PC-9 (cell line): ENCODE measurements at regions of chr19 and their contacts with region 1.

Region 1: DNA sequence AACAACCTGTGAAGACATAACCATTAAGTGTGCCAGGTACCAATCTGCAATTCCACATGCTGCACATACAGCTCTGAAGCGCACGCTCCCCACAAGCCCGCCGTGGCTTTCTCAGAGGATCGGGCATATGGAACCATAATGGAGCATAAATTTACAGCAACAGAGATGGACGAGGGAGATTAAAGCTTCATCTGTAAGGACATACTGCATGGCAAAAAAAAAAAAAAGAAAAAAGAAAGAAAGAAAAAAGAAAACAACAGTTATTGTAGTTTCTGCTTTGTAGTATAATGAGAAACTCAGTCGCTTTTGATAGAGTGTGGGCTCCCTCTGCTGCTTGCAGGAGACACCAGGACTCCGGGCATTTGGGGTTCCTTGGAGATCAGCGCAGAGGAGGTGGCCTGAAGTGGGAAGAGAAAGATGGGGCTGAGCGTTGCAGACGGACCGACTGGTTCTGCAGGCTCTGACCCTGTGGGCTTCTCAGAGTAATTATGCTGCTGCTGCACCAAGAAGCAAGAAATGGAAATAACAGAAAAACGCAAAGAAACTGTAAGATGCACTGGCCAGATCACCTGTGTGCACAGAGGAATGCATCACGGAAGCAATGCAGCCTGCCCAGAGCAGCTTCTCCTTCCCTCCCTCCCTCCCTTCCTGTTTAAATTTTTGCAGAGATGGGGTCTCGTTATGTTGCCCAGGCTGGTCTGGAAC is 10.8 kb upstream of the PDCD5 start:
- DNase-seq: peak; percentile 56 to 61
- H3K4me3 ChIP-seq: no peak overlapping the region
- H3K27ac ChIP-seq: no peak overlapping the region
- H3K4me1 ChIP-seq: no peaks in the 10 kb centered on the region
- H3K27me3 ChIP-seq: peaks cover 46% of the 10 kb centered on the region
- CTCF ChIP-seq: peak; percentile 85

Region 2: GRCh38 chr19:30669329-30670010 is 1900.8 kb before region 1 on chr19:
- CTCF ChIA-PET with region 1: no interaction called
- POLR2A ChIA-PET with region 1: no interaction called
- intact Hi-C with region 1: loop called (anchors 5 kb)
- DNase-seq: peak in 1 of 2 experiments; percentile 28
- H3K4me3 ChIP-seq: no peak overlapping the region
- H3K27ac ChIP-seq: no peak overlapping the region
- H3K4me1 ChIP-seq: no peaks in the 10 kb centered on the region
- H3K27me3 ChIP-seq: peaks cover 60% of the 10 kb centered on the region
- CTCF ChIP-seq: peak; percentile 81

Region 3: DNA sequence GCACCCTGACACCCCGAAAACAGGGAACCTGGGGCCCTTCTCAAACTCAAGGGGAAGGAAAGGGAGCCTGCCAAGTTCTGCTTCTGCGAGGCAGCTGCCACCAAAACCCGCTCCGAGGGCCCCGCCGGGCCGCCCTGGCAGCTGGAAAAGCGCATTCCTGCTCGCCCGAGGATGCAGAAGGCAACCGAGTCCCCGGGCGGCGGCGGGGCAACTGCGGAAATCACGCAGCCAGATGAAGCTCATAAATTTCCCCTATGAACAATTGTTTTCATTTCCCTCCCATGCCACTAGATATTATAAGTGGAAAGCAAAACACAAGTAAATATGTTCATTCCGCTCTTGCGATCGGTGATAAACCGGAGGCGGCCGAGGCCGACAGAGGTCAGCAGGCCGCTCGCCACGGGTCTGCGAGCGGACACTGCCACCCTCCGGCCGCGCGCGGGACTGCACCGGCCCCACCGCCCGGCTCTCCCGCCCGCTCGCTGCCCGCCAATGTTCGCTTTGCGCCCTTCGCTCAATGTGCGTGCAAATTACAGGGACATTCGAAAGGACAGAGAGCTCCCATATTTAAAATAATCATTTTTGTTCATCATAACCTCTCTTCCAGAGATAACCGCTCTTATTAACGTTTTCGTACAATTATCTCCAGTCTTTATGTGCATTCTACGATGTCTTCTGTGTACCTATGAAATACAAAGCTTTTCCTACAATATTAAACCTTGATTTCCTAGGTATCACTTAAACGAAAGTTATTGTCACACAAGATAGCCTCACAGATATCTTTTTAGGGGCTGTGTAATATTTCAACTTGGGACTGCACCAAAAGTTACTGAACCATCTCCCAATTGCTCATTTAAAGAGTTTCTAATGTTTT is 345.6 kb before region 1 on chr19:
- CTCF ChIA-PET with region 1: no interaction called
- POLR2A ChIA-PET with region 1: no interaction called
- intact Hi-C with region 1: loop called (anchors 1 kb)
- DNase-seq: peak in 1 of 2 experiments; percentile 62
- H3K4me3 ChIP-seq: no peak overlapping the region
- H3K27ac ChIP-seq: no peak overlapping the region
- H3K4me1 ChIP-seq: no peaks in the 10 kb centered on the region
- H3K27me3 ChIP-seq: peaks cover 41% of the 10 kb centered on the region
- CTCF ChIP-seq: peak; percentile 94

Region 4: GRCh38 chr19:32318880-32319520 is 251.2 kb before region 1 on chr19:
- CTCF ChIA-PET with region 1: interaction called, 16 read pairs
- POLR2A ChIA-PET with region 1: interaction called, 5 read pairs
- intact Hi-C with region 1: no loop called
- DNase-seq: peak in 1 of 2 experiments; percentile 54
- H3K4me3 ChIP-seq: no peak overlapping the region
- H3K27ac ChIP-seq: no peak overlapping the region
- H3K4me1 ChIP-seq: no peaks in the 10 kb centered on the region
- H3K27me3 ChIP-seq: peaks cover 36% of the 10 kb centered on the region
- CTCF ChIP-seq: peak; percentile 42; the same call in 1 of the 2 replicates

Region 5: DNA sequence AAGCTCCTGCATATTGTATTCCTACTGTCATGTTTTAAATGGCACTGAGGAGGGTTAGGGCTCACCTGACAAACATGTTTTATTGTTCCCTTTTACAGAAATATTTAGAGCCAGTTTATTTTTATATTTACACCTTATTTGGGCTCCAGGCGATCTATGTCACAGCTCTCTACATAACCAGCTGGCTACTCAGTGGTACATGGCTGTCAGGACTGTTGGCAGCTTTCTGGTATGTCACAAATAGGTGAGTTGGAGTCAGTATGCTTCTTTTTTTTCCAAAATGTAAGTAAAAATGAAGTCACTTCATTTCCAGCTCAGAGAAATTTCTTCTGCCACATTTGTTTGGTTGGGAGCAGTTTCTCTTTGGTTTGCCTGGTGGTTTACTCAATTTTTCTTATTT is 133.1 kb before region 1 on chr19:
- CTCF ChIA-PET with region 1: no interaction called
- POLR2A ChIA-PET with region 1: no interaction called
- intact Hi-C with region 1: no loop called
- DNase-seq: no peak
- H3K4me3 ChIP-seq: no peak overlapping the region
- H3K27ac ChIP-seq: no peak overlapping the region
- H3K4me1 ChIP-seq: no peaks in the 10 kb centered on the region
- H3K27me3 ChIP-seq: no peaks in the 10 kb centered on the region
- CTCF ChIP-seq: no peak

Region 6: DNA sequence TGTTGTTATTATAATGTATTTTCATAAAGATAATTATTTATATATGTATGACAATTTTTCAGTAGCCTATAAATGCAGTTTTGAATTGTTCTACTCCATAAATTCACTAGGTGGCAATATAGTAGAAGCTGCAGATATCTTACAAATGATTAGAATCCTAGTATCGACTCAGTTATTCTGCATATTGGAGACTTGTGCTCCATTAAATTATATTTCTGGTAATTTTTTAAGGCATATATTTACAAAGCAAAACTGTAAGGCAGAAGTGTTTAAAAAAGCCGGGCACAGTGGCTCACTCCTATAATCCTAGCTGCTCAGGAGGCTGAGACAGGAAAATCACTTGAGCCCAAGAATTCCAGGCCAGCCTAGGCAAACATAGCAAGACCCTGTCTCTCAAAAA is 106.0 kb before region 1 on chr19:
- CTCF ChIA-PET with region 1: no interaction called
- POLR2A ChIA-PET with region 1: no interaction called
- intact Hi-C with region 1: loop called (anchors 1 kb)
- DNase-seq: no peak
- H3K4me3 ChIP-seq: no peak overlapping the region
- H3K27ac ChIP-seq: no peak overlapping the region
- H3K4me1 ChIP-seq: no peaks in the 10 kb centered on the region
- H3K27me3 ChIP-seq: no peaks in the 10 kb centered on the region
- CTCF ChIP-seq: peak; percentile 67

Region 7: GRCh38 chr19:32543107-32543900 is 26.9 kb before region 1 on chr19:
- CTCF ChIA-PET with region 1: no interaction called
- POLR2A ChIA-PET with region 1: no interaction called
- intact Hi-C with region 1: no loop called
- DNase-seq: peak; percentile 59 to 89
- H3K4me3 ChIP-seq: no peak overlapping the region
- H3K27ac ChIP-seq: no peak overlapping the region
- H3K4me1 ChIP-seq: peaks cover 12% of the 10 kb centered on the region
- H3K27me3 ChIP-seq: peaks cover 38% of the 10 kb centered on the region
- CTCF ChIP-seq: no peak

Region 8: DNA sequence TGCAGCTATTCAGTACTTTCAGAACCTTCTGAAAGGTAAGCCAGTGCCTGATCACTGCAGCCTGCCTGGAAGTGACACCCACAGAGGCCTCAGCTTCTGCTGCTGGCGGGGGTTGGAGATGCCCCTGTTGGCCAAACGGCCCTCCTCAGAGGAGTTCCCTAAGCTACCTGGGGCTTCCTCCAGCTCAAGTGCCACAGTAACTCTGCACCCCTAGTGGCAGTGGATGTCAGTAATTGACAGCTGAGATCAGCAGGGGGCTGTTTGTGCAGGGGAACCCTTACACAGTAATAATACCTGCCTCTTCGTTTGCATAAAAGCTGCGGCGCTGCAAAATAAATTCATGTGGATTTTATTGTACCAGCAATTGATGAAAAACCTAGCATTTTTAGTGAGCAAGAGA is 178.3 kb after region 1 on chr19:
- CTCF ChIA-PET with region 1: no interaction called
- POLR2A ChIA-PET with region 1: no interaction called
- intact Hi-C with region 1: no loop called
- DNase-seq: no peak
- H3K4me3 ChIP-seq: no peak overlapping the region
- H3K27ac ChIP-seq: no peak overlapping the region
- H3K4me1 ChIP-seq: no peaks in the 10 kb centered on the region
- H3K27me3 ChIP-seq: peaks cover 9% of the 10 kb centered on the region
- CTCF ChIP-seq: no peak